OCI-LY7 (cell line): ENCODE measurements at regions of chr2 and their contacts with region 1.

Region 1: DNA sequence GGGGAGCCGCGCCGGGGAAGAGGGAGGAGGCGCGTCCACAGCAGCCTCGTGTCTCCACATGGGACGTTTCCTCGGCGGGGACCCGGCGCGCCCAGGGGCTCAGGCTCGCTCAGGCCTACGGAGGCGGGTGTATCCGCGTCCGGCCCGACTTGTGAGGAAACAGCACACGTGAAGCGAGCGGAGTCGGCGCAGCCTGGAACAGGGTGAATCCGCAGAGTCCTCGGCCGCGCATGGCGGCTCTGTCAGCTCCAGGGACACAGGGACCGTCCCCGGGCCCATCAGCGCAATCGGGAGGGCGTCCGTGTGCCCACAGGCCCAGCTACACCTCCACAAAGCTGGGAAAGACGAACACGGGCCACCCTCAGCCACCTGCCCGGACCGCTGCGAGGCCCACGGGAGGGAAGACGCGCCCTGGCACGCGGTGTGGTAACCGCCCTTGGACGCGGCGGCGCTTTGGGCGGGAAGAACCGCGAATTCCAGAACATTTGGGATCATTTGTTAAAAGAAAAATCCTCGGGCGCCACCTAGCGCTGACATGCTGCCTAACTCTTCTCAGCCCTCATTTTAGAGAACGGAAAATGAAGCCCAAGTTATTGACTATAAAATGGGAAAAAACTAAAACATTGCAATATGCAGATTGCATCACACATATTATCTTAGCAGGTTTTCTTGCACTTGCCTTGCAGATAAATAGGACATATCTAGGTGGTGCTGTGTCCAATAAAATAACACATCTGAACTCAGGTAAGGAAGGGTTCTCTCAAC is 40.4 kb downstream of the TMEM18 start:
- DNase-seq: peak; percentile 42
- H3K4me3 ChIP-seq: no peak overlapping the region
- H3K27ac ChIP-seq: no peak overlapping the region
- H3K4me1 ChIP-seq: no peaks in the 10 kb centered on the region
- CTCF ChIP-seq: peak; percentile 92

Region 2: GRCh38 chr2:246489-247144 is 390.2 kb before region 1 on chr2:
- CTCF ChIA-PET with region 1: no interaction called
- POLR2A ChIA-PET with region 1: no interaction called
- intact Hi-C with region 1: loop called (anchors 5 kb)
- DNase-seq: peak; percentile 54
- H3K4me3 ChIP-seq: no peak overlapping the region
- H3K27ac ChIP-seq: no peak overlapping the region
- H3K4me1 ChIP-seq: no peaks in the 10 kb centered on the region
- CTCF ChIP-seq: peak; percentile 77

Region 3: DNA sequence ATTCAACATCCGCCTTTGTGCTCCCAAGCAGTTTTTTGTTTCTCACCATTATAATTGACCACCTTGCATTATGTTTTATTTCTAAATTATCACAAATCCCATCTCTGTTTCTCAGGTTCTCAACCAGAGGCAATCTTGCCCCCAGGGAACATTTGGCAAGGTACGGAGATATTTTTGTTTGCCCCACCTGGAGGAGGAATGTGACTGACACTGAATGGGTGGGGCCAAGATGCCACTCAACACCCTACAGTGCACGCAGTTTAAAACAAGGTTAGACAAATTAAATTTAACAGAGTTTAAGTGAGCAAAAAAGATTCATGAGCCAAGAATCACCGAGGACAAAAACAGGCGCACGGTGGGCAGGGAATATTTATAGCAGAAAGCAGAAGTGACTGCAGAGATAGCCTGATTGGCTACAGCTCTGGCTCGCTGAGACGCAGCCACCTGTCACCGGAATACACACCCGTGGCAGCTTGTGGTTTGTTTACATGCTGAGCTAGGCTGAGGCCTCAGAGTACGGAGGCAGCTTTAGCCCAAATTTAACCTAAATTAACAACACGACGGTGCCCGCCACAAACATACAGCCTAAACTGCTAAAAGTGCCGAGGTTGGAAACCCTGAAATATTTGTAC is 198.9 kb before region 1 on chr2:
- CTCF ChIA-PET with region 1: no interaction called
- POLR2A ChIA-PET with region 1: no interaction called
- intact Hi-C with region 1: no loop called
- DNase-seq: peak; percentile 41
- H3K4me3 ChIP-seq: no peak overlapping the region
- H3K27ac ChIP-seq: peak overlapping the region; percentile 53
- H3K4me1 ChIP-seq: no peaks in the 10 kb centered on the region
- CTCF ChIP-seq: no peak

Region 4: DNA sequence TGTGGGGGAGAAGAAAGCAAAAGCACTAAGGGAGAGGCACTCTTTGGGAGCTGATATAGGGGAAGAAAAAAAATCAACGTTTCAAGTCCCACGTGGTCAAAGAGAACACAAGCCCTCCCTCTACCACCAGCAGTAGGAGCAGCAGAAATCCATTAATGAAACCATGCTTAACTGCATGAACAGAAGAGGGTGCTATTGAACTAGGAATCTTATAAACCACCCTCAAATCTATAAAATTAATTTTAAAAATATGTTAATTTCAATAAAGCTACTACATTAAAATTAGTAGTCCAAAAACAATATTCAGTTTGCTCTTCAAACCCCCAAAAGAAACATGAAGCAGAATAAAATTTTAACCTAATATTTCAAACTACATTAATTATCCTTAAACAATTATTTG is 107.4 kb before region 1 on chr2:
- CTCF ChIA-PET with region 1: no interaction called
- POLR2A ChIA-PET with region 1: no interaction called
- intact Hi-C with region 1: loop called (anchors 5 kb)
- DNase-seq: peak; percentile 26
- H3K4me3 ChIP-seq: no peak overlapping the region
- H3K27ac ChIP-seq: no peak overlapping the region
- H3K4me1 ChIP-seq: no peaks in the 10 kb centered on the region
- CTCF ChIP-seq: peak; percentile 70

Region 5: DNA sequence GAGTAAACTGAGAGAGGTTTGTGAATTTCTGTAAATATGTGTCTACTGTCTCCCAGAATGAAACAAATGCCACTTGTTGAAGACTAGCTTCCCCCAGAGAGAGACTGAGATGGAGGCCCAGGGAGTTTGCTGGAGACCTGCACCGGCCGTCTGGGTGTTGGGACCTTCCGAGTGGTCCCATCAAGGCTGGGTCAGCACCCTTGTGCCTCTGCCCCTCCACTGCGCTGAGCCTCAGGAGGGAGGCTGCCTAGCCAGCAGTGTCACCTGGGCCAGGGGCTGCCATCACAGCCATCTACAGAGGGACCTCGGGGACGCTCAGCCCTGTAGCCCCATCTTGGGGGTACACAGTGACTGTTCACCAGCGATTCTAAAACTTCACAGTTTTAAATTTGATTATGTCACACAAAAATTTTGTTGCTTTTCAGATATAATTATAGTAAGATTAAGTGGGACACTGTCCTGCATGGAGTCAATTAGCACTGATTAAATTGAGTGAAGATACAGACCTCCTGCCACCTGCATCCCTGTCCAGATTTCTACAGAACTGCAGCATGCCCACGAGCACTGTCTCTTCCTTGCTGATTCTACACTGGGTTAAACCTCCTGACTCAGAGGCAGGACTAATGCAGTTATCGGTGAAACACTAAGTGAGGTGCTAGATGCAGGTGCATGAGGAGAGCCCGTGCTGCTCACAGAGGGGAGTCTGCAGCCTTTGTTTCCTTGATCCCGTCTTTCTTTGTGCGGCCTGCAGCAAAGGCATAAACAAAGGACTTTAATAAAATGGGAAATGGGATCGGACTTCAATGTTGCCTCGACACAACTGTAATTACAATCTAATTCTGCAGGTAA is 10.1 kb before region 1 on chr2:
- CTCF ChIA-PET with region 1: no interaction called
- POLR2A ChIA-PET with region 1: no interaction called
- intact Hi-C with region 1: no loop called
- DNase-seq: no peak
- H3K4me3 ChIP-seq: no peak overlapping the region
- H3K27ac ChIP-seq: no peak overlapping the region
- H3K4me1 ChIP-seq: no peaks in the 10 kb centered on the region
- CTCF ChIP-seq: no peak